IMR-90 (cell line): ENCODE measurements at regions of chrX and their contacts with region 1.

Region 1: DNA sequence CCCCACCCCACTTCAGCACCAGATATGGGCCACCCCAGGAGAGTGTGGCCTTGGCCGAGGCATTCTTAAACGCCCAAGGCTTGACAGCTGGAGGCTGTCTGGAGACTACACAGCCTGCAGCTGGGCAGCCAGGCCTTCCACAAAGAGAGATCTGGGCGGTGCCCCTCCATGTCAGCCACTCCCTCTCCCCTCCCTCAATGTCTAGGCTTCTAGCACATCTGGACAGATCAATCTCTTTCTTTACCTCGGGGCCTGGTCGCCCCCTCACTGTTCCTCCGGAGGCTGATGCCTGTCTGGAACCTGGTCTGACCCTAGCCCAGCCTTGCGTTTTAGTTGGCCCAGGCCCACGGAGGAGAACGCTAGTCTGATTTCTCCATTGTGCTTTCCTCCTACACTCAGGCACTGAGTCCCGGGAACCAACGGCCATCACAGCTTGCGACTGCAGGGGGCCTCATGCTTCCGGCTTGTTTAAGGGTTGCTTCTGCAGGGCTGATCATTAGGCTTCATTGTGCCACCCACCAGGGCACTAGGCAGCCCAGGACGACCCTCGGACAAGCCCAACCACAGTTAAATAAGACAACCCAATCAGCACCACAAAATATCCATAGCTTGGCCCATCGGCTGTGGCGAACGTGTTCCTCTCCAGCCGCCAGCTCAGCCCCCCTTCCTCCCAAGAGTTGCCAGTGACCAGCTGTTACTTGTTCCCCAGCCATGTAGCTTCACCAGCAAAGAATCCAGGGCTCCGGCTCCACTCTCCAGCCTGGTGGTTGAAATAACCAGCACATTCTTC is 200.6 kb downstream of the BCOR start:
- DNase-seq: peak; percentile 62
- ATAC-seq: peak; percentile 83
- H3K4me3 ChIP-seq: no peak overlapping the region
- H3K27ac ChIP-seq: peak overlapping the region; percentile 39
- H3K4me1 ChIP-seq: peaks cover 10% of the 10 kb centered on the region
- H3K27me3 ChIP-seq: no peaks in the 10 kb centered on the region; the same call in 1 of the 2 replicates
- CTCF ChIP-seq: 0 out of 2 replicates have a peak, but pooled peaks have one; percentile 1
- POLR2A ChIP-seq: no peak
- RAD21 ChIP-seq: no peak

Region 2: DNA sequence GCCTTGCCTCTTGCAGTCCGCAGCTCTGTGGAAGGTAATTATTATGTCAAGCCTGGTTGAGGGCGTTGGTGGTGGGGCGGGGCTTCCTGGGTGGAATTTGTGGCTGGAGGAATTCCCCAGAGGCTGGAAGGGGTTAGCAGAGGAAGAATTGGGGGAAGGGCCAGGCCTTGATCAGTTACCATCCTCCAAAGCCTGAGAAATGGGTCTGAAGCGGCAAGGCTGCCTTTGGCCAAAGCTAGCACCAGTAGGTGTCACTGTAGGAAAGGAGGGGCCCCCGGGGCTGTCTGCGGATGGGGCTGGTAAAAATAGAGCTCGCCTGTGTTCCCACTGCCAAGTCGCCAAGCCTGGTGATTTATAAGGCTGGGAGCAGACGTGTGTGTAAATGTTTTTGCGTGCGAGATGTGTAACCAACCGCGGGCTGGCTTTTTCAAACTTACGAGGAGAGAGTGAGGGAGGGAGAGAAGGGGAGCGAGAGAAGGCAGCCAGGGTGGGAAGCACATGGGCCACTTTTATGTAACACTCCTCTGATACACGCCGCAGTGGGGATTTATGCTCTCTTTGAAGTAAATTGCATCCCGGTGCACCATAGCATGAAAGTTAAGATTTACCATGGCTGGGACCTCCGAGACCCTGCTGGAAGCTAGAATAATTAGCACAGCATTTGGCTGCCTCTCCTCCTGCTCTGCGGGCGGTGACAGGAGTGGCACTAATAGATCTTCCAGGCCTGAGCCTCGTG is 166.3 kb before region 1 on chrX:
- CTCF ChIA-PET with region 1: no interaction called
- POLR2A ChIA-PET with region 1: no interaction called
- dilution Hi-C with region 1: no loop called
- in situ Hi-C with region 1: no loop called
- intact Hi-C with region 1: loop called (anchors 5 kb)
- DNase-seq: peak; percentile 88
- ATAC-seq: peak; percentile 81
- H3K4me3 ChIP-seq: no peak overlapping the region
- H3K27ac ChIP-seq: no peak overlapping the region
- H3K4me1 ChIP-seq: peaks cover 10% of the 10 kb centered on the region
- H3K27me3 ChIP-seq: peaks cover 21% of the 10 kb centered on the region
- CTCF ChIP-seq: peak; percentile 77
- POLR2A ChIP-seq: peak; percentile 43; the same call in 1 of the 2 replicates
- RAD21 ChIP-seq: peak; percentile 85

Region 3: GRCh38 chrX:39814391-39814790 is 82.8 kb before region 1 on chrX:
- CTCF ChIA-PET with region 1: no interaction called
- POLR2A ChIA-PET with region 1: no interaction called
- dilution Hi-C with region 1: no loop called
- in situ Hi-C with region 1: no loop called
- intact Hi-C with region 1: loop called (anchors 2 kb)
- DNase-seq: peak; percentile 23
- ATAC-seq: peak; percentile 13; the same call in 1 of the 2 replicates
- H3K4me3 ChIP-seq: no peak overlapping the region
- H3K27ac ChIP-seq: no peak overlapping the region
- H3K4me1 ChIP-seq: peaks cover 3% of the 10 kb centered on the region; the same call in 1 of the 2 replicates
- H3K27me3 ChIP-seq: peaks cover 4% of the 10 kb centered on the region; the same call in 1 of the 2 replicates
- CTCF ChIP-seq: peak; percentile 47
- POLR2A ChIP-seq: no peak
- RAD21 ChIP-seq: peak; percentile 61

Region 4: DNA sequence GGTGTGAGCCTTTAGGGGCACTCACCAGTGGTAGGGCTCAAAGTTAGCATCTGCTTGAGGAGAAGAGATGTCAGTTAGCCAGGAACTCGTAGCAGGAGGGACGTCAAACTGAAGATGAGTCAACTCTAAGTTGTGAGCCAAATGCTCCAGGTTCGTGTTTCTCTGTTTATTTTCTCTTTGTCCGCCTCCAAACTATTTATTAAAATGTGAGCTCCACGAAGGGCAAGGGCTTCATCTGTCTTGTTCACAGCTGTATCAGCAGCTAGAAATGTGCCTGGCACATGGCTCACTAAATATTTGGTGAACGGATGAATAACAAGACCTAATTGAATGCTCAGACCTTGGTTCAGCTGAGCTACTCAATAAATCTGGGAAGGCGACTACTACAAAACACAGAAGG is 48.2 kb before region 1 on chrX:
- CTCF ChIA-PET with region 1: no interaction called
- POLR2A ChIA-PET with region 1: no interaction called
- dilution Hi-C with region 1: no loop called
- in situ Hi-C with region 1: no loop called
- intact Hi-C with region 1: loop called (anchors 1 kb)
- DNase-seq: peak; percentile 95
- ATAC-seq: peak; percentile 77
- H3K4me3 ChIP-seq: no peak overlapping the region
- H3K27ac ChIP-seq: no peak overlapping the region
- H3K4me1 ChIP-seq: peaks cover 6% of the 10 kb centered on the region
- H3K27me3 ChIP-seq: peaks cover 16% of the 10 kb centered on the region; the same call in 1 of the 2 replicates
- CTCF ChIP-seq: no peak
- POLR2A ChIP-seq: no peak
- RAD21 ChIP-seq: no peak

Region 5: DNA sequence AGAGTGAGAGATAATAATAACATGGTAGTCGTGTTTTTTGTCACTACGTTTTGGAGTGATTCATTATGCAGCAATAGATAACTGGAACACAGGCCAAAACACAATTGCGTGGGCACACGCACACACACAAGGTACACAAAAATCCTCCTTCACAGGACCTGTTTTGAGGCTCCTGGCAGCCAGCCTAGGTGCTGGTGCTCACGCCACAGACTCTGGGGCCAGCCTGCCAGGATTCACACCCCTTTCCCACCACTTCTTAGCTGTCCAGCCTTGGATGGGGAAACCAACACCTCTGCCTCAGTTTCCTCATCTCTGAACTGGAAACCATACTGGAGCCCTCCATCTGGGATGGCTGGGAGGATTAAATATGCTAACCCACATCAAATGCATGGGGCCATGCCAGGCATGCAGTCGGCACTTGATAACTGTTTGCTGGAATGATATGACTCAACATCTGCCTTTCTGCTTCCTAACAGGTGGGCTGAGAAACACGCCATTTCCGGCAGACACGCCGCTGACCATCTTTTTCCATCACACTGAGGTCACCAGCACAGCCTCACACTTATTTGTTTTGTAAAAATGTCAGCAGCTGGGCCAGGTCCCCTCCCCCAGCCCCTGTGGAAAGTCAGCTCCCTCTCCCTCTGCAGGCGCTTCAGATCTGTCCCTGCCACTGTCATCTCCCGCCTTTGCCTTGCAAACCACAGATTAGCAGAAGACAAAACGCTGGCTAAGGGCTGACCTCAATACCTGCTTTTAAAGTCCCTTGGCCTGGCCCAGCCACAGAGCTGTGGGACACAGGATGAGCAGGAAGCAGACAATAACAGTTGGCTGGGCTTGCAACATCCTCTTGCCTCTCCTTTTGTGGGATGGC is 36.9 kb before region 1 on chrX:
- CTCF ChIA-PET with region 1: no interaction called
- POLR2A ChIA-PET with region 1: interaction called, 3 read pairs
- dilution Hi-C with region 1: no loop called
- in situ Hi-C with region 1: no loop called
- intact Hi-C with region 1: loop called (anchors 1 kb)
- DNase-seq: peak; percentile 91
- ATAC-seq: peak; percentile 67
- H3K4me3 ChIP-seq: no peak overlapping the region
- H3K27ac ChIP-seq: no peak overlapping the region; the same call in 1 of the 2 replicates
- H3K4me1 ChIP-seq: peaks cover 7% of the 10 kb centered on the region
- H3K27me3 ChIP-seq: peaks cover 11% of the 10 kb centered on the region; the same call in 1 of the 2 replicates
- CTCF ChIP-seq: no peak
- POLR2A ChIP-seq: no peak
- RAD21 ChIP-seq: peak; percentile 13; the same call in 1 of the 2 replicates

Region 6: GRCh38 chrX:40013266-40014195 is 116.4 kb after region 1 on chrX:
- CTCF ChIA-PET with region 1: no interaction called
- POLR2A ChIA-PET with region 1: no interaction called
- dilution Hi-C with region 1: no loop called
- in situ Hi-C with region 1: no loop called
- intact Hi-C with region 1: loop called (anchors 2 kb)
- DNase-seq: peak; percentile 47
- ATAC-seq: peak; percentile 40
- H3K4me3 ChIP-seq: peak overlapping the region; percentile 49
- H3K27ac ChIP-seq: peak overlapping the region; percentile 56
- H3K4me1 ChIP-seq: peaks cover 10% of the 10 kb centered on the region
- H3K27me3 ChIP-seq: peaks cover 4% of the 10 kb centered on the region
- CTCF ChIP-seq: 0 out of 2 replicates have a peak, but pooled peaks have one; percentile 13
- POLR2A ChIP-seq: no peak
- RAD21 ChIP-seq: no peak

Region 7: DNA sequence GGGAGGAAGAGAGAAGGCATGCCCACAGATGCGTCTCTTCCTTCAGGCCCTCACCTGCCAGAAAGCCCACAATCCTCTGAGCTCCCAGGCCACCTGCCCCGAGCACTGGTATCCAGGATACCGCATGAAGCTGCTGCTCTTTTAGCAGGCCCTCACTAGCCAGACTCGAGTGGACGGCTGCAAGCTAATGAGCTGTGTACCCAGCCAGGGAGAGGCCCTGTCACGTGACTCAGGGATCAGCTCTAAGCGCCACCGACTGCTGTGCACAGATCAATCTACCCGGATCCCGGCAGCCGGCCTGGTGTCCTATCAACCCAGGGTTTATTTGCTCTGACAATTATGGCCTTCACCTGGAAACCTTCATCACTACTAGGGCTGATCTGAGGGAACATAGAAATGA is 161.6 kb after region 1 on chrX:
- CTCF ChIA-PET with region 1: no interaction called
- POLR2A ChIA-PET with region 1: no interaction called
- dilution Hi-C with region 1: no loop called
- in situ Hi-C with region 1: no loop called
- intact Hi-C with region 1: no loop called
- DNase-seq: no peak
- ATAC-seq: no peak
- H3K4me3 ChIP-seq: no peak overlapping the region
- H3K27ac ChIP-seq: no peak overlapping the region
- H3K4me1 ChIP-seq: no peaks in the 10 kb centered on the region; the same call in 1 of the 2 replicates
- H3K27me3 ChIP-seq: no peaks in the 10 kb centered on the region; the same call in 1 of the 2 replicates
- CTCF ChIP-seq: no peak
- POLR2A ChIP-seq: no peak
- RAD21 ChIP-seq: no peak

Region 8: GRCh38 chrX:40083120-40083978 is 186.2 kb after region 1 on chrX:
- CTCF ChIA-PET with region 1: no interaction called
- POLR2A ChIA-PET with region 1: no interaction called
- dilution Hi-C with region 1: no loop called
- in situ Hi-C with region 1: no loop called
- intact Hi-C with region 1: loop called (anchors 5 kb)
- DNase-seq: no peak
- ATAC-seq: no peak
- H3K4me3 ChIP-seq: peak overlapping the region; percentile 20
- H3K27ac ChIP-seq: no peak overlapping the region
- H3K4me1 ChIP-seq: peaks cover 19% of the 10 kb centered on the region
- H3K27me3 ChIP-seq: no peaks in the 10 kb centered on the region
- CTCF ChIP-seq: no peak
- POLR2A ChIP-seq: no peak
- RAD21 ChIP-seq: no peak

Region 9: GRCh38 chrX:40591126-40591525 is 694.0 kb after region 1 on chrX:
- CTCF ChIA-PET with region 1: no interaction called
- POLR2A ChIA-PET with region 1: no interaction called
- dilution Hi-C with region 1: no loop called
- in situ Hi-C with region 1: no loop called
- intact Hi-C with region 1: no loop called
- DNase-seq: no peak
- ATAC-seq: no peak
- H3K4me3 ChIP-seq: no peak overlapping the region
- H3K27ac ChIP-seq: no peak overlapping the region
- H3K4me1 ChIP-seq: no peaks in the 10 kb centered on the region
- H3K27me3 ChIP-seq: peaks cover 2% of the 10 kb centered on the region; the same call in 1 of the 2 replicates
- CTCF ChIP-seq: no peak
- POLR2A ChIP-seq: no peak
- RAD21 ChIP-seq: no peak